ENCODE measurements at regions of chr5 and their contacts with region 1.

Region 1: DNA sequence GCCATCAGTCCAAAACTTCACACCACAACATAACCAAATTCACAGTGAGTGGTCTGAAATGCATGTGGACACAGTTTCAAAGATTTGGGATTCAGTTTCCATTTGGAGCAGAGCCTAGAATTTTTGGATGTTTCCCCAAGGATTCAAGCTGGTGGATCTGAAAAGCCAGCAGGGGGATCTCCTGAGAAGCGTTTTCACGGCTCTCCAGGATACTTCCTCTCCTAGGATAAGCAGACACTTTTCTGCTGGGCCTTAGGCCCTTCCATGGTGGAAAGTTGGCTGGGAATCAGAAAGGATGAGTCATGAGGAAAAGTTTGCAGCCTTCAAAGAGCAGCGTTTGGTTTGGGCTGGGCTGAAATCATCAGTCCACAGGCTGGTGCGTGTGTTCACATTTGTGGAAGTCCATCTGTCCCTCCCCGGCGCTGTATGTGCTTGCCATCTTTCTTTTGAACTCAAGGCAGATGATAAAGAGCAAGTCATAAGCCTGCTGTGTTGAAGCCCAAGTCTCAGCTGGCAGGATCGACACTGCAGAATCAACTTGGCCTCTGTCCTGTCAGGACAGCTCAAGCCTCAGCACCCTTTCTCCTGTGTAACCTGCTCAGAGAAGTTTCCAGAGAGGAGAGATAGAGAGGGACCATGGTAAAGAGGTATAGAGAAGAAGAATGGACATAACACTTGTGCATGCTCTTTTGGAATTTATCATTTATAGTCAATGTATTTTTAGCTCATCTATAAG is 152.6 kb upstream of the MSX2 start:
- DNase-seq: peak in 1 of 2 donors; percentile 71
- ATAC-seq: peak; percentile 92
- H3K4me3 ChIP-seq: no peak overlapping the region
- H3K27ac ChIP-seq: peak overlapping the region in 1 of 2 donors; percentile 11
- H3K4me1 ChIP-seq: peaks cover 0 to 2% of the 10 kb centered on the region in 2 donors
- H3K27me3 ChIP-seq: no peaks in the 10 kb centered on the region

Region 2: GRCh38 chr5:174581894-174582293 is 10.1 kb after region 1 on chr5:
- intact Hi-C with region 1: loop called in 1 of 2 experiments (anchors 1 kb)
- DNase-seq: no peak
- ATAC-seq: no peak
- H3K4me3 ChIP-seq: no peak overlapping the region
- H3K27ac ChIP-seq: no peak overlapping the region
- H3K4me1 ChIP-seq: no peaks in the 10 kb centered on the region
- H3K27me3 ChIP-seq: no peaks in the 10 kb centered on the region

Region 3: GRCh38 chr5:174655351-174655750 is 83.5 kb after region 1 on chr5:
- intact Hi-C with region 1: no loop called
- DNase-seq: no peak
- ATAC-seq: no peak
- H3K4me3 ChIP-seq: no peak overlapping the region
- H3K27ac ChIP-seq: no peak overlapping the region
- H3K4me1 ChIP-seq: no peaks in the 10 kb centered on the region
- H3K27me3 ChIP-seq: peaks cover 0 to 2% of the 10 kb centered on the region in 2 donors

Region 4: DNA sequence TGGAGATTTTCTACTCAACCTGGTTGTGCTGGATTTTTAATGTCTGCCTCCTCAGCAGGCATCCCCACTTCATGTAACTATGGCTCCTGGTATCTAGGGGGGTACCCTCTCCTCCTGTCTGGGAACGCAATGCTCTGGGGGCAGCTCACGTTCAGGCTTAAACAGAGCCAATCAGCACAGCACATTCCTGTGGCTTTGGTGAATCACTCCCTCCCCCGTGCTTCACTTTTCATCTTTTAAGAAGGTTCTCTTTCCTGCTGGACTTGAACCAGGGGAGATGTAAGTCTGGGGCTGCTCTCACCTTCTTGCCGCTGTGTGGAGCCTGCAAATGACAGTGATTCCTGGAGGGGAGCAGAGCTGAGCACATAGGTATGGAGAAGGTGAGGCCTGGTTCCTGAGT is 253.8 kb after region 1 on chr5:
- intact Hi-C with region 1: no loop called
- DNase-seq: no peak
- ATAC-seq: no peak
- H3K4me3 ChIP-seq: no peak overlapping the region
- H3K27ac ChIP-seq: no peak overlapping the region
- H3K4me1 ChIP-seq: no peaks in the 10 kb centered on the region
- H3K27me3 ChIP-seq: peaks cover 0 to 2% of the 10 kb centered on the region in 2 donors

Measured in aorta (tissue), 5 donors.